ENCODE measurements at regions of chrX and their contacts with region 1.

Region 1: GRCh38 chrX:24241822-24242648 is 71.8 kb downstream of the SUPT20HL2 start:
- DNase-seq: peak; percentile 38
- H3K4me3 ChIP-seq: no peak overlapping the region
- H3K27ac ChIP-seq: no peak overlapping the region
- H3K4me1 ChIP-seq: no peaks in the 10 kb centered on the region
- H3K27me3 ChIP-seq: peaks cover 0 to 6% of the 10 kb centered on the region in 2 experiments
- CTCF ChIP-seq: peak in 1 of 2 donors; percentile 4
- POLR2A ChIP-seq: no peak

Region 2: GRCh38 chrX:23694606-23695005 is 547.4 kb before region 1 on chrX:
- CTCF ChIA-PET with region 1: no interaction called
- POLR2A ChIA-PET with region 1: no interaction called
- dilution Hi-C with region 1: no loop called
- intact Hi-C with region 1: loop called (anchors 5 kb)
- DNase-seq: peak; percentile 42
- H3K4me3 ChIP-seq: no peak overlapping the region
- H3K27ac ChIP-seq: no peak overlapping the region
- H3K4me1 ChIP-seq: no peaks in the 10 kb centered on the region
- H3K27me3 ChIP-seq: no peaks in the 10 kb centered on the region
- CTCF ChIP-seq: peak; percentile 5 to 33
- POLR2A ChIP-seq: no peak

Region 3: GRCh38 chrX:23907498-23908218 is 334.4 kb before region 1 on chrX and contains the starts of genes APOO and CXorf58:
- CTCF ChIA-PET with region 1: interaction called, 5 read pairs
- POLR2A ChIA-PET with region 1: no interaction called
- dilution Hi-C with region 1: no loop called
- intact Hi-C with region 1: loop called (anchors 2 kb)
- DNase-seq: peak; percentile 91
- H3K4me3 ChIP-seq: peak within 1 kb of the TSS; percentile 51 to 82 (median 72)
- H3K27ac ChIP-seq: peak within 1 kb of the TSS; percentile 68
- H3K4me1 ChIP-seq: peaks cover 5% of the 10 kb centered on the region
- H3K27me3 ChIP-seq: no peaks in the 10 kb centered on the region
- CTCF ChIP-seq: peak; percentile 71 to 83
- POLR2A ChIP-seq: peak; percentile 39
- total RNA-seq, gene APOO: 20.9 and 24.3 TPM in 2 replicates
- total RNA-seq, gene CXorf58: not detected in 2 replicates

Region 4: DNA sequence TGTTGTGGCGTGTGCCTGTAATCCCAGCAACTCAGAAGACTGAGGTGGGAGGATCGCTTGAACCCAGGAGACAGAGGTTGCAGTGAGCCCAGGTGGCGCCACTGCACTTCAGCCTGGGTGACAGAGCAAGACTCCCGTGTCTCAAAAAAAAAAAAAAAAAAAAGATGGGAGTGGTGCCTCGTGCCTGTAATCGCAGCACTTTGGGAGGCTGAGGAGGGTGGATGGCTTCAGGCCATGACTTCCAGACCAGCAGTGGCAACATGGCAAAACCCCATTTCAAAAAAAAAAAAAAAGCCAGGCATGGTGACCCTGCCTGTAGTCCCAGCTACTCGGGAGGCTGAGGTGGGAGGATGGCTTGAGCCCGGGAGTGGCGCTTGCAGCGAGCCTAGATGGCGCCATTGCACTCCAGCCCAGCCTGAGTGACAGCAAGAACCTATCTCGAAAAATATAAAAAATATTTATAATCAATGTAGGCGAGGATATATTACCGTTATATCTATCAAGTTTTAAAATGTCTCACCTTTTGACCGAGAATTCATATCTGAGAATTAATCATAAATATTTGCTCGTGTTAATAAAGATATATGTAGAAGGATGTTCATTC is 160.3 kb before region 1 on chrX:
- CTCF ChIA-PET with region 1: interaction called, 18 read pairs
- POLR2A ChIA-PET with region 1: no interaction called
- dilution Hi-C with region 1: no loop called
- intact Hi-C with region 1: loop called (anchors 1 kb)
- DNase-seq: peak; percentile 66
- H3K4me3 ChIP-seq: no peak overlapping the region
- H3K27ac ChIP-seq: no peak overlapping the region
- H3K4me1 ChIP-seq: no peaks in the 10 kb centered on the region
- H3K27me3 ChIP-seq: no peaks in the 10 kb centered on the region
- CTCF ChIP-seq: peak; percentile 33 to 53
- POLR2A ChIP-seq: no peak

Region 5: DNA sequence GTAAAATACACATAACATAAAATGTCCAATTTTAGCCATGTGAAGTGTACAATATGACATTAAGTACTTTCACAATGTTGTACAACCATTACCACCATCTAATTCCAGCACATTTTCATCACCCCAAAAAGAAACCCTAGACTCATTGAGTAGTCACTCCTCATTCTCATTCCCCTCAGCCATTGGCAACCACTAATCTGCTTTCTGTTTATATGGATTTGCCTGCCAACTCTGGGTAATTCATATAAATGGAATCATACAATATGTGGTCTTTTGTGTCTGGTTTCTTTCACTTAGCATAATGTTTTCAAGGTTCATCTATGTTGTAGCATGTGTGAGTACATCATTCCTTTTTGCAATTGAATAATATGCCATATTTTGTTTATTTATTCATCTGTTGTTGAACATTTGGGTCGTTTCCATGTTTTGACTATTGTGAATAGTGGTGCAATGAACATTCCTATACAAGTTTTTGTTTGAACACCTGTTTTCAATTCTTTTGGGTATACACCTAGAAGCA is 144.2 kb before region 1 on chrX:
- CTCF ChIA-PET with region 1: no interaction called
- POLR2A ChIA-PET with region 1: no interaction called
- dilution Hi-C with region 1: no loop called
- intact Hi-C with region 1: no loop called
- DNase-seq: no peak
- H3K4me3 ChIP-seq: no peak overlapping the region
- H3K27ac ChIP-seq: no peak overlapping the region
- H3K4me1 ChIP-seq: no peaks in the 10 kb centered on the region
- H3K27me3 ChIP-seq: no peaks in the 10 kb centered on the region
- CTCF ChIP-seq: no peak
- POLR2A ChIP-seq: no peak